ENCODE measurements at regions of chr6 and their contacts with region 1.

Region 1: GRCh38 chr6:49531774-49532569 is 18.5 kb upstream of the C6orf141 start:
- DNase-seq: no peak
- H3K4me3 Mint-ChIP-seq: no peak overlapping the region
- H3K27ac Mint-ChIP-seq: no peak overlapping the region
- H3K4me1 Mint-ChIP-seq: peaks cover 2% of the 10 kb centered on the region
- H3K27me3 Mint-ChIP-seq: peaks cover 8% of the 10 kb centered on the region

Region 2: DNA sequence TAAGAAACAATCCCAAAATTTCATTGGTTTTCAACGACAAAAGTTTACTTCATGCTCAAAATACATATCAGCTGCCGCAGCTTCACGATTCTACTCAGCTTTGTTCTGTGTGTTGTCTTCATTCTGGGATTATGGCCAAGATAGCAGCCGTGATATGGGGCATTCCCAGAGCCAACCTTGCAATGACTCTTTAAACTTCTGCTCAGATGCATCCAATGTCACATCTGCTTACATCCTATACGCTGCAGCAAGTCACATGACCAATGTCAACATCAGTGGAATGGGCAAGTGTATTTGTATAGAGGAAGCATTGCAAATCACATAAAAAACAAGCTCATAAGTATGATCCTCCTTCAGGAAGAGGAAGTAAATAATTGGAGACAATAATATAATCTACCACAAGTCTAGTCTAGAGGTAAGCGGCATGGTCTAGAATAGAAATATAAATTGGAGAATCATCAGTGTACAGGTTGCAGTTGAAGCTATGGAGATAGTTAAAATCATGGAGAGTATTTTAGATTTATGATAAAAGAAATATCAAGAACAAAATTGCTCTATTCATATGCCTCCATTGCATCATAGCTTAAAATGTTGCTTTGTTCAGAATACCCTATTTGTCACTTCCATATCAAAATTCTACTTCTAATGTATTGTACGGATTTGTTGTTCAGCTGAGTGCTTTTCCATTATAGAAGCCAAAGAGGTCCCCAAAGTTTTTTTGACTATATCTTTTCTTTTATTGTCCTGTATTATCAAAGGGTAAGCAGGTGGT is 11.3 kb after region 1 on chr6:
- CTCF ChIA-PET with region 1: interaction called, 14 read pairs
- DNase-seq: no peak
- H3K4me3 Mint-ChIP-seq: no peak overlapping the region
- H3K27ac Mint-ChIP-seq: no peak overlapping the region
- H3K4me1 Mint-ChIP-seq: no peaks in the 10 kb centered on the region
- H3K27me3 Mint-ChIP-seq: peaks cover 7% of the 10 kb centered on the region

Region 3: GRCh38 chr6:49550492-49551077 is 18.6 kb after region 1 on chr6 and contains the start of gene C6orf141:
- CTCF ChIA-PET with region 1: interaction called, 15 read pairs
- DNase-seq: peak; percentile 59
- H3K4me3 Mint-ChIP-seq: peak within 1 kb of the TSS; percentile 68
- H3K27ac Mint-ChIP-seq: no peak within 1 kb of the TSS
- H3K4me1 Mint-ChIP-seq: peaks cover 21% of the 10 kb centered on the region
- H3K27me3 Mint-ChIP-seq: peaks cover 35% of the 10 kb centered on the region

Region 4: GRCh38 chr6:49606696-49607390 is 74.9 kb after region 1 on chr6:
- CTCF ChIA-PET with region 1: interaction called, 46 read pairs
- DNase-seq: peak; percentile 41
- H3K4me3 Mint-ChIP-seq: no peak overlapping the region
- H3K27ac Mint-ChIP-seq: no peak overlapping the region
- H3K4me1 Mint-ChIP-seq: no peaks in the 10 kb centered on the region
- H3K27me3 Mint-ChIP-seq: no peaks in the 10 kb centered on the region

Region 5: DNA sequence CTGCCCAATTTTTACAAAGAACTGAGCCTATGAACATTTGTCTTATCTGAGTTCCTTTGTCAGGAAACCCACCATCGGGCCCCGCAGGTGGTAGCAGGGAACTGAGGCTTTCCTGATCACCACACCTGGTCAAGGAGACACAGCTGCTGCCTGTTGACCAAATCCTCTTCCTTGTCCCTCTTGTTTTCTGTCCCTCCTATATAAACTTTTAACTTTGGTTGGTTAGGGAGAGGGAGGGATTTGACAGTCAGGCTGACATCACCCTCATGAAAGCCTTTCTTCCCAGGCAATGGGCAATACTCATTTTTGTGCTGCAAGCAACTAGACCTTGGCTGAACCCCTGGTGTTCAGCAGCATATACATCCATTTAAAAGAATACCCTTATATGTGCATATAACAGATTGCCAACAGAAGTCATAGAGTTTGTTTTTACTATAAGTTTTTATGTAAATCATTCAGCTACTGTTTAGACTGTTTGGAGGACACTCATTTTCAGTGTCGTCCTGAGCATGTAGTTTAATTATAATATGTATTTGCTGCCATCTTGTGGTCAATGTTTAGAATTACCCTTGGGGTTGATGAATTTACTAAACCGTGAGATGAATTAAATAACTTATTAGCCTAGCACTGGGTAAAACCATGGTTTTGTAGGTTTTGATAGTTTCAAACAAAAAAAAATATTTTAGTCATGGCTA is 317.4 kb after region 1 on chr6:
- CTCF ChIA-PET with region 1: interaction called, 17 read pairs
- DNase-seq: no peak
- H3K4me3 Mint-ChIP-seq: no peak overlapping the region
- H3K27ac Mint-ChIP-seq: no peak overlapping the region
- H3K4me1 Mint-ChIP-seq: no peaks in the 10 kb centered on the region
- H3K27me3 Mint-ChIP-seq: no peaks in the 10 kb centered on the region

Measured in activated naive CD4-positive, alpha-beta T cell treated with anti-CD3 and anti-CD28 coated beads, Interleukin-2, amount 10 ng/mL, durations not matched to agents 7 days and 5 days (primary cell).